Caco-2 (cell line): ENCODE measurements at regions of chr7 and their contacts with region 1.

Region 1: DNA sequence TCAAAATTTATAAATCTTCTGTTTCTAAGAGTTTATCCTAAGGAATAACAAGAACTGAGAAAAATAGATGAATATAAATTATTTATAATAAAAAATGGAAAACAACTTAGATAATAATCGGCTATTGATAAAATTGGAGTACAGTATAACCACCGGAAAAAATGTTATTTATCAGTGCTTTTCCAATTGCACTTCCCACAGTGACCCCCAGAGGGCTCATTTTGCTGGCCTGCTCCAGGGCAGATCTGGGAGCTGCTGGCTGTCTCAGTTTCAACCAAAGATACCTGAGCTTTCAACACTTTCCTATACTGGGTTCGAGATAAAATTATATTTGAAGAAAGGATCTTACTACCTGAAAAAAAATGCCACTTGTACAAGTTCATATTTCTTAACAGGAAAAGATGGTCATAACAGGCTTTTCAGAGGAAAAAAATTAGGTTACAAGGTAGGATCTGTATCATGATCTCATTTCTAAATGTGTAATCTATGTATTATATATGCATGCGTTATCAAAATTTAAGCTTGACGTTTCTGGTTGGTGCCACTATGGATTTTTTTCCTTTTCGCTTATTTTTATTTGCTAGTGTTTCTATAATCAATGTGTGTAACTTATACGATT is 165.7 kb downstream of the NPSR1 start:
- DNase-seq: peak; percentile 59 to 68
- H3K4me3 ChIP-seq: no peak overlapping the region
- H3K4me3 Mint-ChIP-seq: no peak overlapping the region
- H3K27ac Mint-ChIP-seq: no peak overlapping the region
- H3K4me1 ChIP-seq: no peaks in the 10 kb centered on the region
- H3K4me1 Mint-ChIP-seq: no peaks in the 10 kb centered on the region
- H3K27me3 ChIP-seq: no peaks in the 10 kb centered on the region; the same call in 1 of the 2 replicates
- H3K27me3 Mint-ChIP-seq: peaks cover 5% of the 10 kb centered on the region
- CTCF ChIP-seq: peak; percentile 88 to 90

Region 2: GRCh38 chr7:34675749-34676374 is 147.9 kb before region 1 on chr7:
- CTCF ChIA-PET with region 1: no interaction called
- POLR2A ChIA-PET with region 1: no interaction called
- intact Hi-C with region 1: loop called (anchors 10 kb)
- DNase-seq: peak in 1 of 2 experiments; percentile 35
- H3K4me3 ChIP-seq: no peak overlapping the region
- H3K4me3 Mint-ChIP-seq: no peak overlapping the region
- H3K27ac Mint-ChIP-seq: no peak overlapping the region
- H3K4me1 ChIP-seq: no peaks in the 10 kb centered on the region
- H3K4me1 Mint-ChIP-seq: peaks cover 6% of the 10 kb centered on the region
- H3K27me3 ChIP-seq: no peaks in the 10 kb centered on the region
- H3K27me3 Mint-ChIP-seq: no peaks in the 10 kb centered on the region
- CTCF ChIP-seq: peak; percentile 47 to 81

Region 3: DNA sequence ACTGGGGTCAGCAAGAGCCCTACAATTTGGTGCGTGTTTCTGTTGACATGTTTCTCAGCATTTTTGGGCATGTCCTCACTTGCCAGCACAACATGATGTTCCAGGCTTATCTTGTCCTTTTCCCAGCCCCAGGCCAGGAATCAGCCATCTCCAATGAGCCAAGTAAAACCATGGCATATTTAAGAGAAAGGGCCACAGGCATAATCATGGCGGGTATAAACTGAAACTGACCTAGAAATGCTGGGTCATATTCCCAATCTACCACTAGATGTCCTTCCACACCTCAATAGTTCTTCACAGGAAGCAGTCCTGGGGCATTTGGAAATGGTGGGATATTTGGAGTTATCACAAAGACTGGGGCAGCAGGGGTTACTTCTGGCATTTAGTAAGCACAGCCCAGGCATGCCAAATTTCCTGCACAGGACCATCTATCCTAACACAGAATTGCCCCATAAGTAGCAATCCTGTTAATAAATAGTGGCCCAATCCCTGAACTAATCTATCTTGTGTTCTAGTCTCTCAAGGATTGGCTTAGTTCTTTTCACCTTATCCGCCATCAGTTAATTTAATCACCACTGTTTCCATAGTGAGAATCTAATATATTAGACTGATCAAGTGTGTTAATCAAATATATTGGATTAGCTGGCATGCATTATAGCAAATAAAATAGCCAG is 64.2 kb before region 1 on chr7:
- CTCF ChIA-PET with region 1: no interaction called
- POLR2A ChIA-PET with region 1: no interaction called
- intact Hi-C with region 1: loop called (anchors 5 kb)
- DNase-seq: peak in 1 of 2 experiments; percentile 24
- H3K4me3 ChIP-seq: no peak overlapping the region
- H3K4me3 Mint-ChIP-seq: no peak overlapping the region
- H3K27ac Mint-ChIP-seq: no peak overlapping the region
- H3K4me1 ChIP-seq: no peaks in the 10 kb centered on the region; the same call in 1 of the 2 replicates
- H3K4me1 Mint-ChIP-seq: peaks cover 11% of the 10 kb centered on the region
- H3K27me3 ChIP-seq: no peaks in the 10 kb centered on the region
- H3K27me3 Mint-ChIP-seq: no peaks in the 10 kb centered on the region
- CTCF ChIP-seq: peak; percentile 36 to 49

Region 4: DNA sequence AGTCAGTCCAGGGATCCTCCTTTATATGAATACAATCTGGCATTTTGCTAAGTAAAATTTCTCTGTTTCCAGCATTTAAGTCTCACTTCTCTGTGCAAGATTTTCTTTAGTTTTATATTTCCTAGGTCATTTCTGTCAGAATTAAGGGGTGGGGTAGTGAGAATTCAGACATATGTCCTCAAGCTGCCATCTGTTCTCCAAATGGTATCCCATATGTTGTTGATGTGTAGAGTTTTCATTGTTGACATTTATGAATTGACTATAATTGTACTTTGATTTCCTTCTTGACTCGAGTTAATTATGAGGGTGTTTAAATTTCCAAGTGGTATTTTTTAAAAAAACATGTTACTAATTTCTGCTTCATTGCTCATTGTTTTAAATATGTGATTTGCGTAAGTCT is 16.9 kb before region 1 on chr7:
- CTCF ChIA-PET with region 1: no interaction called
- POLR2A ChIA-PET with region 1: no interaction called
- intact Hi-C with region 1: no loop called
- DNase-seq: no peak
- H3K4me3 ChIP-seq: no peak overlapping the region
- H3K4me3 Mint-ChIP-seq: no peak overlapping the region
- H3K27ac Mint-ChIP-seq: no peak overlapping the region
- H3K4me1 ChIP-seq: no peaks in the 10 kb centered on the region
- H3K4me1 Mint-ChIP-seq: no peaks in the 10 kb centered on the region
- H3K27me3 ChIP-seq: no peaks in the 10 kb centered on the region
- H3K27me3 Mint-ChIP-seq: peaks cover 8% of the 10 kb centered on the region
- CTCF ChIP-seq: no peak

Region 5: DNA sequence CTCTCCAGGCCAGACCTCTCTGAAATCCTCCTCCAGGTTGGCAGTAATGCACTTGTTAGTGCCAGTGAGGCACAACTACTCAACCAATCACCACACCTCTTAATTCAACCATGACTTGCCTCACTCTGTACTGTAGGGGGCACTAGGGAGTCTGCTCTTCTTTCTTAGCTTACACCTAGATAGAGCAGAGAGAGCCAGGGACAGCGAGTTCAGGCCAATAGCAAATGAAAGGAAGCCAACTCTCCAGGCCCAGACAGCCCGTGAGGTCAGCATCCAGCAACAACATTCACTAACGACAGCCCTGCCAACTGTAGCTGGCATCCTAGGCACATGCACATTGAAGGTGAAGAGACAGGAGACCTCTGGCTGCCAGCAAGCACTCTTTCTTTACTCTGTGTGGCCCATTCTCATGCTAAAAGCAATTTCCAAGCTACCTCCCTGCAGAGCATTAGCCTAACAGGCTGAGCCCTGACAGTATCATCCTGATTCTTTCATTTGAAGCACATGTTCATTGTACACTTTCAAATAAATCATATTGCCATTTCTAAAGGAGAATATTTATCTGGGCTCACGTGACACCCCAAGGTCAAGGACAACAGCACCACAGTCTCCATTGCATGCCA is 77.3 kb after region 1 on chr7:
- CTCF ChIA-PET with region 1: no interaction called
- POLR2A ChIA-PET with region 1: no interaction called
- intact Hi-C with region 1: loop called (anchors 2 kb)
- DNase-seq: no peak
- H3K4me3 ChIP-seq: no peak overlapping the region
- H3K4me3 Mint-ChIP-seq: no peak overlapping the region
- H3K27ac Mint-ChIP-seq: no peak overlapping the region
- H3K4me1 ChIP-seq: no peaks in the 10 kb centered on the region
- H3K4me1 Mint-ChIP-seq: no peaks in the 10 kb centered on the region
- H3K27me3 ChIP-seq: no peaks in the 10 kb centered on the region
- H3K27me3 Mint-ChIP-seq: peaks cover 8% of the 10 kb centered on the region
- CTCF ChIP-seq: peak in 1 of 2 experiments; percentile 18

Region 6: DNA sequence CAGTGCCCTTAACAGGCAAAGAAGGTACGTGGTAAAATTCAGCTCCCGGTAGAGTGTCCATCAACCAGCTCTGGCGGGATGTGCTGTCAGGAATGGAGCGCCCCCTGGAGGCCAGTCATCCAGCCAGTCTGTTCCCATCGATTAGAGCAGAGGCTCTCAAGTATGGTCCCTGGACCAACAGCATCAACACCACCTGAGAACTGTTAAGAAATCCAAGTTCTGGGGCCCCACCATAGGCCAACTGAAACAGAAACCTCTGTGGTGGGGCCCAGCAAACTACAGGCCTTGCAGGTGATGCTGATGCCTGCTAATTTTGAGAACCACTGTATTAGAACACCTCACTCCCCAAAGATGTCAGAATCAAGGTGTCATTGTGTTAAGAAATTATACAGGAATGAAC is 104.3 kb after region 1 on chr7:
- CTCF ChIA-PET with region 1: interaction called, 9 read pairs
- POLR2A ChIA-PET with region 1: no interaction called
- intact Hi-C with region 1: loop called (anchors 1 kb)
- DNase-seq: peak; percentile 68 to 78
- H3K4me3 ChIP-seq: no peak overlapping the region
- H3K4me3 Mint-ChIP-seq: no peak overlapping the region
- H3K27ac Mint-ChIP-seq: no peak overlapping the region
- H3K4me1 ChIP-seq: no peaks in the 10 kb centered on the region
- H3K4me1 Mint-ChIP-seq: no peaks in the 10 kb centered on the region
- H3K27me3 ChIP-seq: no peaks in the 10 kb centered on the region
- H3K27me3 Mint-ChIP-seq: peaks cover 2% of the 10 kb centered on the region
- CTCF ChIP-seq: peak; percentile 70 to 71

Region 7: DNA sequence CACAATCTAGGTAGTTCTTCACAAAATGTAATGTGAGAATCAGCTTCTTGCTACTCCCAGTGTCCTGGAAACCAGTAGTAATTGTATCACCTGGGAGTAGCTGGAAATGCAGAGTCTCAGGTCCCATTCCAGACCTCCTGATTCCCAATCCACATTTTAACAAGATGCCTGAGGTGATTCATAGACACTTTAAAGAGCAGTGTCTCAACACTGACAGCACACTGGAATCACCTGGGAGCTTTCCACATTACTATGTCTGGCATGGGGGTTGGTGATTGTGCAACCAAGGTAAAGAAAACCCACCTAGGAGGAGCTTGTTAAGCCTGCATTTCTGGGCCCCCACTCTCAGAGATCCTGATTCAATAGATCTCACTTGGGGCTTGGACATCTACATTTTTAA is 202.4 kb after region 1 on chr7:
- CTCF ChIA-PET with region 1: no interaction called
- POLR2A ChIA-PET with region 1: no interaction called
- intact Hi-C with region 1: no loop called
- DNase-seq: no peak
- H3K4me3 ChIP-seq: no peak overlapping the region
- H3K4me3 Mint-ChIP-seq: no peak overlapping the region
- H3K27ac Mint-ChIP-seq: no peak overlapping the region
- H3K4me1 ChIP-seq: no peaks in the 10 kb centered on the region
- H3K4me1 Mint-ChIP-seq: peaks cover 6% of the 10 kb centered on the region
- H3K27me3 ChIP-seq: no peaks in the 10 kb centered on the region
- H3K27me3 Mint-ChIP-seq: no peaks in the 10 kb centered on the region
- CTCF ChIP-seq: no peak

Region 8: GRCh38 chr7:35037526-35038339 is 214.0 kb after region 1 on chr7:
- CTCF ChIA-PET with region 1: interaction called, 3 read pairs
- POLR2A ChIA-PET with region 1: no interaction called
- intact Hi-C with region 1: loop called (anchors 1 kb)
- DNase-seq: peak; percentile 92 to 97
- H3K4me3 ChIP-seq: peak overlapping the region; percentile 64
- H3K4me3 Mint-ChIP-seq: peak overlapping the region; percentile 96
- H3K27ac Mint-ChIP-seq: peak overlapping the region; percentile 38
- H3K4me1 ChIP-seq: 0 out of 2 replicates have a peak, but pooled peaks cover 17% of the 10 kb centered on the region
- H3K4me1 Mint-ChIP-seq: peaks cover 7% of the 10 kb centered on the region
- H3K27me3 ChIP-seq: no peaks in the 10 kb centered on the region
- H3K27me3 Mint-ChIP-seq: peaks cover 15% of the 10 kb centered on the region
- CTCF ChIP-seq: peak; percentile 74